ENCODE measurements at regions of chr4 and their contacts with region 1.

Region 1: GRCh38 chr4:70734168-70734954 is 12.6 kb downstream of the RUFY3 start:
- DNase-seq: peak; percentile 59 to 73 (median 66)
- H3K4me3 ChIP-seq: peak overlapping the region; percentile 15 to 46
- H3K4me3 Mint-ChIP-seq: peak overlapping the region; percentile 67 to 88 (median 80)
- H3K27ac ChIP-seq: peak overlapping the region; percentile 71
- H3K27ac Mint-ChIP-seq: peak overlapping the region; percentile 63 to 96 (median 88)
- H3K4me1 ChIP-seq: peaks cover 49% of the 10 kb centered on the region
- H3K4me1 Mint-ChIP-seq: peaks cover 31 to 50% (median 42%) of the 10 kb centered on the region in 4 donors
- H3K27me3 ChIP-seq: no peaks in the 10 kb centered on the region
- H3K27me3 Mint-ChIP-seq: no peaks in the 10 kb centered on the region

Region 2: DNA sequence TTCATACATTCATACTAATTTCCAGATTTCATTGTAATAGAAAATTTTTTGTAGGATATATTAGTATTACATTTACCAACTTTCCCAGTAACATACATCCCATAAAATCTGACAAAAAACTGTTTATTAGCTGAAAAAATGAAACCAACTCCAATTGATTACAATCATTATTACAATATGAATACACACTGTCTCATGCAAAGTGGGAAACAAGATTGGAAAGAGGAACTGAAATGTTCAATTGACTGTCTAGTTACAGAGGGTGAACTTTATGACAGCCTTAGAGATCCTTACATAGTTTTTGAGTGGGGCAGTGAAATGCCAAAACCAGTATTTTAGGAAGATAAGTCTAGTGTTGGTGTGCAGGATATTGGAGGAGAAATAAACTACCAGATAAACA is 144.6 kb before region 1 on chr4:
- CTCF ChIA-PET with region 1: no interaction called
- POLR2A ChIA-PET with region 1: no interaction called
- intact Hi-C with region 1: no loop called
- DNase-seq: no peak
- H3K4me3 ChIP-seq: no peak overlapping the region
- H3K4me3 Mint-ChIP-seq: no peak overlapping the region
- H3K27ac ChIP-seq: no peak overlapping the region
- H3K27ac Mint-ChIP-seq: no peak overlapping the region
- H3K4me1 ChIP-seq: no peaks in the 10 kb centered on the region
- H3K4me1 Mint-ChIP-seq: peaks cover 0 to 2% (median under 1%) of the 10 kb centered on the region in 4 donors
- H3K27me3 ChIP-seq: no peaks in the 10 kb centered on the region
- H3K27me3 Mint-ChIP-seq: peaks cover 1 to 3% of the 10 kb centered on the region in 2 donors

Region 3: GRCh38 chr4:70651864-70652506 is 82.4 kb before region 1 on chr4:
- CTCF ChIA-PET with region 1: interaction called, 10 read pairs
- POLR2A ChIA-PET with region 1: no interaction called
- intact Hi-C with region 1: loop called (anchors 2 kb)
- DNase-seq: peak in 4 of 5 donors; percentile 27 to 47 (median 32)
- H3K4me3 ChIP-seq: no peak overlapping the region
- H3K4me3 Mint-ChIP-seq: no peak overlapping the region
- H3K27ac ChIP-seq: no peak overlapping the region
- H3K27ac Mint-ChIP-seq: no peak overlapping the region
- H3K4me1 ChIP-seq: no peaks in the 10 kb centered on the region
- H3K4me1 Mint-ChIP-seq: peaks cover 0 to 4% (median 3%) of the 10 kb centered on the region in 4 donors
- H3K27me3 ChIP-seq: peaks cover 7% of the 10 kb centered on the region
- H3K27me3 Mint-ChIP-seq: peaks cover 2 to 5% of the 10 kb centered on the region in 2 donors

Region 4: GRCh38 chr4:70704331-70705145 is 29.8 kb before region 1 on chr4:
- CTCF ChIA-PET with region 1: interaction called, 127 read pairs
- POLR2A ChIA-PET with region 1: interaction called, 135 read pairs
- intact Hi-C with region 1: loop called (anchors 1 kb)
- DNase-seq: peak; percentile 43 to 73 (median 49)
- H3K4me3 ChIP-seq: peak overlapping the region; percentile 32 to 71
- H3K4me3 Mint-ChIP-seq: peak overlapping the region; percentile 87 to 96 (median 91)
- H3K27ac ChIP-seq: peak overlapping the region; percentile 79
- H3K27ac Mint-ChIP-seq: peak overlapping the region; percentile 89 to 97 (median 95)
- H3K4me1 ChIP-seq: peaks cover 28% of the 10 kb centered on the region
- H3K4me1 Mint-ChIP-seq: peaks cover 17 to 29% (median 21%) of the 10 kb centered on the region in 4 donors
- H3K27me3 ChIP-seq: no peaks in the 10 kb centered on the region
- H3K27me3 Mint-ChIP-seq: no peaks in the 10 kb centered on the region

Region 5: DNA sequence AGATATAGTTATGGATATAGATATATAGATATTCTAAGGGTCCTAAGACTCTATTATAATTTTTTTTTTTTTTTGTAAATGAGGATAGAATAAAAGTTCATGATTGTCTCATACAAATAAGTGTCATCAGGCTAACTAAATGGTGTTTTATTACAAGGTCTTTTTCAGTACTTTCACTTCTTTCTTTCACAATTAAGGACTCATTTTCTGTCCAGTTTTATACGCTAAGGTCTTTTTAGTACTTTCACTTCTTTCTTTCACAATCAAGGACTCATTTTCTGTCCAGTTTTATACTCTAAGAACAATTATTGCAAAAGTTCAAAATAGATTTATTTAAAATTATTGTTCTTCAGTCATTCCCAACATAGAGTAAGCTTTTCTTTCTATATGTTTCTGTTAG is 20.1 kb after region 1 on chr4:
- CTCF ChIA-PET with region 1: interaction called, 36 read pairs
- POLR2A ChIA-PET with region 1: interaction called, 15 read pairs
- intact Hi-C with region 1: loop called (anchors 2 kb)
- DNase-seq: no peak
- H3K4me3 ChIP-seq: no peak overlapping the region
- H3K4me3 Mint-ChIP-seq: no peak overlapping the region
- H3K27ac ChIP-seq: no peak overlapping the region
- H3K27ac Mint-ChIP-seq: no peak overlapping the region
- H3K4me1 ChIP-seq: peaks cover 6% of the 10 kb centered on the region
- H3K4me1 Mint-ChIP-seq: peaks cover 12 to 16% (median 14%) of the 10 kb centered on the region in 4 donors
- H3K27me3 ChIP-seq: no peaks in the 10 kb centered on the region
- H3K27me3 Mint-ChIP-seq: no peaks in the 10 kb centered on the region

Region 6: GRCh38 chr4:70818173-70818855 is 84.0 kb after region 1 on chr4:
- CTCF ChIA-PET with region 1: interaction called, 10 read pairs
- POLR2A ChIA-PET with region 1: no interaction called
- intact Hi-C with region 1: no loop called
- DNase-seq: no peak
- H3K4me3 ChIP-seq: no peak overlapping the region
- H3K4me3 Mint-ChIP-seq: no peak overlapping the region
- H3K27ac ChIP-seq: no peak overlapping the region
- H3K27ac Mint-ChIP-seq: peak overlapping the region in 5 of 7 donors; percentile 38 to 77 (median 52)
- H3K4me1 ChIP-seq: no peaks in the 10 kb centered on the region
- H3K4me1 Mint-ChIP-seq: peaks cover 8 to 11% (median 9%) of the 10 kb centered on the region in 4 donors
- H3K27me3 ChIP-seq: no peaks in the 10 kb centered on the region
- H3K27me3 Mint-ChIP-seq: no peaks in the 10 kb centered on the region

Region 7: GRCh38 chr4:71009890-71010588 is 275.7 kb after region 1 on chr4:
- CTCF ChIA-PET with region 1: interaction called, 15 read pairs
- POLR2A ChIA-PET with region 1: interaction called, 3 read pairs
- intact Hi-C with region 1: no loop called
- DNase-seq: peak in 4 of 5 donors; percentile 28 to 56 (median 49)
- H3K4me3 ChIP-seq: no peak overlapping the region
- H3K4me3 Mint-ChIP-seq: peak overlapping the region in 2 of 8 donors; percentile 18 to 29
- H3K27ac ChIP-seq: peak overlapping the region; percentile 5
- H3K27ac Mint-ChIP-seq: peak overlapping the region; percentile 7 to 79 (median 60)
- H3K4me1 ChIP-seq: peaks cover 46% of the 10 kb centered on the region
- H3K4me1 Mint-ChIP-seq: peaks cover 22 to 43% (median 33%) of the 10 kb centered on the region in 4 donors
- H3K27me3 ChIP-seq: no peaks in the 10 kb centered on the region
- H3K27me3 Mint-ChIP-seq: no peaks in the 10 kb centered on the region